ENCODE measurements at regions of chrX and their contacts with region 1.

Region 1: DNA sequence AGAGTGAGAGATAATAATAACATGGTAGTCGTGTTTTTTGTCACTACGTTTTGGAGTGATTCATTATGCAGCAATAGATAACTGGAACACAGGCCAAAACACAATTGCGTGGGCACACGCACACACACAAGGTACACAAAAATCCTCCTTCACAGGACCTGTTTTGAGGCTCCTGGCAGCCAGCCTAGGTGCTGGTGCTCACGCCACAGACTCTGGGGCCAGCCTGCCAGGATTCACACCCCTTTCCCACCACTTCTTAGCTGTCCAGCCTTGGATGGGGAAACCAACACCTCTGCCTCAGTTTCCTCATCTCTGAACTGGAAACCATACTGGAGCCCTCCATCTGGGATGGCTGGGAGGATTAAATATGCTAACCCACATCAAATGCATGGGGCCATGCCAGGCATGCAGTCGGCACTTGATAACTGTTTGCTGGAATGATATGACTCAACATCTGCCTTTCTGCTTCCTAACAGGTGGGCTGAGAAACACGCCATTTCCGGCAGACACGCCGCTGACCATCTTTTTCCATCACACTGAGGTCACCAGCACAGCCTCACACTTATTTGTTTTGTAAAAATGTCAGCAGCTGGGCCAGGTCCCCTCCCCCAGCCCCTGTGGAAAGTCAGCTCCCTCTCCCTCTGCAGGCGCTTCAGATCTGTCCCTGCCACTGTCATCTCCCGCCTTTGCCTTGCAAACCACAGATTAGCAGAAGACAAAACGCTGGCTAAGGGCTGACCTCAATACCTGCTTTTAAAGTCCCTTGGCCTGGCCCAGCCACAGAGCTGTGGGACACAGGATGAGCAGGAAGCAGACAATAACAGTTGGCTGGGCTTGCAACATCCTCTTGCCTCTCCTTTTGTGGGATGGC is 237.5 kb downstream of the BCOR start:
- DNase-seq: peak in 5 of 9 donors; percentile 16 to 74 (median 19)
- ATAC-seq: peak; percentile 40
- H3K4me3 ChIP-seq: no peak overlapping the region
- H3K4me3 Mint-ChIP-seq: peak overlapping the region in 6 of 10 donors; percentile 12 to 60 (median 48)
- H3K27ac ChIP-seq: no peak overlapping the region
- H3K27ac Mint-ChIP-seq: peak overlapping the region in 8 of 9 donors; percentile 37 to 89 (median 56)
- H3K4me1 ChIP-seq: peaks cover 17 to 19% of the 10 kb centered on the region in 2 donors
- H3K4me1 Mint-ChIP-seq: peaks cover 10 to 50% (median 26%) of the 10 kb centered on the region in 7 donors
- H3K27me3 ChIP-seq: no peaks in the 10 kb centered on the region
- H3K27me3 Mint-ChIP-seq: no peaks in the 10 kb centered on the region

Region 2: DNA sequence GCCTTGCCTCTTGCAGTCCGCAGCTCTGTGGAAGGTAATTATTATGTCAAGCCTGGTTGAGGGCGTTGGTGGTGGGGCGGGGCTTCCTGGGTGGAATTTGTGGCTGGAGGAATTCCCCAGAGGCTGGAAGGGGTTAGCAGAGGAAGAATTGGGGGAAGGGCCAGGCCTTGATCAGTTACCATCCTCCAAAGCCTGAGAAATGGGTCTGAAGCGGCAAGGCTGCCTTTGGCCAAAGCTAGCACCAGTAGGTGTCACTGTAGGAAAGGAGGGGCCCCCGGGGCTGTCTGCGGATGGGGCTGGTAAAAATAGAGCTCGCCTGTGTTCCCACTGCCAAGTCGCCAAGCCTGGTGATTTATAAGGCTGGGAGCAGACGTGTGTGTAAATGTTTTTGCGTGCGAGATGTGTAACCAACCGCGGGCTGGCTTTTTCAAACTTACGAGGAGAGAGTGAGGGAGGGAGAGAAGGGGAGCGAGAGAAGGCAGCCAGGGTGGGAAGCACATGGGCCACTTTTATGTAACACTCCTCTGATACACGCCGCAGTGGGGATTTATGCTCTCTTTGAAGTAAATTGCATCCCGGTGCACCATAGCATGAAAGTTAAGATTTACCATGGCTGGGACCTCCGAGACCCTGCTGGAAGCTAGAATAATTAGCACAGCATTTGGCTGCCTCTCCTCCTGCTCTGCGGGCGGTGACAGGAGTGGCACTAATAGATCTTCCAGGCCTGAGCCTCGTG is 129.4 kb before region 1 on chrX:
- CTCF ChIA-PET with region 1: no interaction called
- POLR2A ChIA-PET with region 1: no interaction called
- intact Hi-C with region 1: loop called in 1 of 2 experiments (anchors 10 kb)
- DNase-seq: peak; percentile 15 to 59 (median 47)
- ATAC-seq: peak; percentile 80
- H3K4me3 ChIP-seq: no peak overlapping the region
- H3K4me3 Mint-ChIP-seq: peak overlapping the region in 8 of 10 donors; percentile 30 to 76 (median 50)
- H3K27ac ChIP-seq: no peak overlapping the region
- H3K27ac Mint-ChIP-seq: peak overlapping the region in 6 of 9 donors; percentile 53 to 90 (median 76)
- H3K4me1 ChIP-seq: no peaks in the 10 kb centered on the region
- H3K4me1 Mint-ChIP-seq: peaks cover 0 to 15% (median 4%) of the 10 kb centered on the region in 7 donors
- H3K27me3 ChIP-seq: no peaks in the 10 kb centered on the region
- H3K27me3 Mint-ChIP-seq: no peaks in the 10 kb centered on the region

Region 3: DNA sequence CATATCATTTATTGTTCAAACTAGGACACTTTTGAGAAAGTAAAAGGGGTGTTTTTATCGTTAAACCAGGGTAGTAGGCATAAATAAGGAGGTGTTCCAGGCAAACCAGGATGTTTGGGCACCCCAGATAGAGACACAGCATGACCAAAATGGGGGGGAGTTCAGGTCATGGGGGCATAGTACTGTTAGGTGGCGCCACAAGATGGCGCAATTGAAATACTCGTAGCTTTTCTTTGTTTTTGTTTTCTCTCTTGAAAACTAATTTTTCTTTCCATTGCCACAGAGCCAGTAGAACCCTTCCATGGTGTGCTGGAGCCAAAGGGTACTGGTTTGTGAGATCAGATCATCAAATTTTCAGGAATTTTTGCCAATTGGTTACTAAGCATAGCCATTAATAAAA is 45.8 kb before region 1 on chrX:
- CTCF ChIA-PET with region 1: interaction called, 4 read pairs
- POLR2A ChIA-PET with region 1: interaction called, 4 read pairs
- intact Hi-C with region 1: loop called in 1 of 2 experiments (anchors 1 kb)
- DNase-seq: peak in 6 of 9 donors; percentile 17 to 46 (median 32)
- ATAC-seq: peak; percentile 75
- H3K4me3 ChIP-seq: no peak overlapping the region
- H3K4me3 Mint-ChIP-seq: no peak overlapping the region
- H3K27ac ChIP-seq: no peak overlapping the region
- H3K27ac Mint-ChIP-seq: no peak overlapping the region
- H3K4me1 ChIP-seq: no peaks in the 10 kb centered on the region
- H3K4me1 Mint-ChIP-seq: peaks cover 0 to 36% (median 12%) of the 10 kb centered on the region in 7 donors
- H3K27me3 ChIP-seq: no peaks in the 10 kb centered on the region
- H3K27me3 Mint-ChIP-seq: no peaks in the 10 kb centered on the region

Region 4: DNA sequence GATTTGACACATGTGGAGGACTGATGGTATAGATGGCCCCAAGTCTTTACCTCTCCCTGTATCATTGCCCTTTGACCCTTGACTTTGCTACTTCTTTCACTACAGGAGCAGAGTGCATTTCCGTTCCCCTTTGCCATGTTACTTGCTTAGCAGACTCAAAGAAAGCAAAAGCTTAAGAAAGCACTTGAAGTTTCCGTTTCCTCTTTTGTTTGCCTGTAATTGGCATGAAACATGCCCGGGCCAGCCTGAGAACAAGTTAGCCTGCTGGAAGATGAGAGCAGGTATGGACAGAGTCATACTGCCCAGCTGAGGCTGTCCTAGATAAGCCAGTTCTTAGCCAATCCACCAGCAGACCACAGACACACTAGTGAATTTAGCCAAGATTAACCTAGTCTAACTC is 31.6 kb after region 1 on chrX:
- CTCF ChIA-PET with region 1: no interaction called
- POLR2A ChIA-PET with region 1: no interaction called
- intact Hi-C with region 1: loop called in 1 of 2 experiments (anchors 5 kb)
- DNase-seq: peak in 6 of 9 donors; percentile 8 to 45 (median 23)
- ATAC-seq: peak; percentile 18
- H3K4me3 ChIP-seq: no peak overlapping the region
- H3K4me3 Mint-ChIP-seq: peak overlapping the region in 9 of 10 donors; percentile 14 to 54 (median 43)
- H3K27ac ChIP-seq: no peak overlapping the region
- H3K27ac Mint-ChIP-seq: peak overlapping the region in 8 of 9 donors; percentile 70 to 92 (median 81)
- H3K4me1 ChIP-seq: peaks cover 0 to 9% of the 10 kb centered on the region in 2 donors
- H3K4me1 Mint-ChIP-seq: peaks cover 10 to 24% (median 18%) of the 10 kb centered on the region in 7 donors
- H3K27me3 ChIP-seq: no peaks in the 10 kb centered on the region
- H3K27me3 Mint-ChIP-seq: peaks cover 0 to 10% (median 0%) of the 10 kb centered on the region in 5 donors

Region 5: GRCh38 chrX:40013266-40014195 is 153.3 kb after region 1 on chrX:
- CTCF ChIA-PET with region 1: no interaction called
- POLR2A ChIA-PET with region 1: no interaction called
- intact Hi-C with region 1: loop called (anchors 5 kb)
- DNase-seq: peak in 2 of 9 donors; percentile 18 to 53
- ATAC-seq: peak; percentile 42
- H3K4me3 ChIP-seq: peak overlapping the region; percentile 51
- H3K4me3 Mint-ChIP-seq: peak overlapping the region; percentile 70 to 87 (median 75)
- H3K27ac ChIP-seq: no peak overlapping the region
- H3K27ac Mint-ChIP-seq: peak overlapping the region in 2 of 9 donors; percentile 43 to 83
- H3K4me1 ChIP-seq: peaks cover 0 to 31% of the 10 kb centered on the region in 2 donors
- H3K4me1 Mint-ChIP-seq: peaks cover 5 to 35% (median 24%) of the 10 kb centered on the region in 7 donors
- H3K27me3 ChIP-seq: no peaks in the 10 kb centered on the region
- H3K27me3 Mint-ChIP-seq: peaks cover 0 to 24% (median 0%) of the 10 kb centered on the region in 5 donors

Region 6: DNA sequence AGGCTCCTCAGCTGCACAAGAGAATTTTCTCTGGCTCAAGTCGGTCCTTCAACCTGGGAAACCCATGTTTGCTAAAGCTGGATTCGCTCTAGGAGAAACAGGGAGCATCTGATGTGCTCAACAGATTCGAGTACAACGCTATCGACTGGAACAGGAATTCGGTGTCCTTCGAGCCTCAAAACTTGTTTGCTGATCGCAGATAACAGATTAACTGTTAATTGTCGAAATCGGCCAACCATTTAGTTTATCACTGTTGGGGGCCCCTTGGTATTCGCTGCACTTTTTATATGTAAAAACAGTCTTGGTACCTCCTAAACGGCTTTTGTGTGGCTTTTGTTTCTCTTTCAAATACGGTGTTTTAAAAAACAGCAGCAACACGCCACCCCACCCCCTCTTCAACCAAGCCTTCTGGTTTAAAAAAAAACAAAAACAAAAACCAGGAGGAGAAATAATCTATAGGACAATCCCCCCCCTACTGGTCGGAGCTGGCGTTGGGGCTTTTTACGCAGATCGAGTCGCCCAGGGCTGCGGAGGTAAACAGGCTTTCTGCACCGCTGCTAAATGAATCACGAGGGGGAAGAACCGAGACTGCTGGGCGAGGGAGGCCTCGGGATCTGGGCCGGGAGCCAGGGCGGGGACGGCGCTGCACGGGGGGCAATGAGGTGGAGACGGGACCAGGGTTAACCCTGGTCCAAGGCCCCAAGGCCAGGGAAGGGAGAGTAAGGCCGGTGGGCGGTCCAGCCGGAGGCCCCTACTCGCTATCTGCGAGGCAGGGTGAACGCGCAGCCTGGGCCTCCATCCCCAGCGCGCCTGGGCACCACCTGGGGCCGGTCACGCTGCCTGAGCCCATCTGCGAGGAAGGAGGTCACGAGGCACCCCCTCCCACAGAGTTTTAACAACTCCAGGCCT is 309.2 kb after region 1 on chrX:
- CTCF ChIA-PET with region 1: no interaction called
- POLR2A ChIA-PET with region 1: interaction called, 3 read pairs
- intact Hi-C with region 1: loop called in 1 of 2 experiments (anchors 1 kb)
- DNase-seq: peak in 8 of 9 donors; percentile 65 to 81 (median 74)
- ATAC-seq: peak; percentile 79
- H3K4me3 ChIP-seq: peak overlapping the region; percentile 51
- H3K4me3 Mint-ChIP-seq: peak overlapping the region; percentile 86 to 94 (median 90)
- H3K27ac ChIP-seq: peak overlapping the region; percentile 98
- H3K27ac Mint-ChIP-seq: peak overlapping the region; percentile 96 to 99 (median 98)
- H3K4me1 ChIP-seq: peaks cover 14 to 31% of the 10 kb centered on the region in 2 donors
- H3K4me1 Mint-ChIP-seq: peaks cover 17 to 64% (median 40%) of the 10 kb centered on the region in 7 donors
- H3K27me3 ChIP-seq: no peaks in the 10 kb centered on the region
- H3K27me3 Mint-ChIP-seq: no peaks in the 10 kb centered on the region

Measured in naive thymus-derived CD4-positive, alpha-beta T cell (primary cell).